ENCODE measurements at regions of chr5 and their contacts with region 1.

Region 1: GRCh38 chr5:74934949-74935751 is 69.0 kb upstream of the FAM169A start:
- DNase-seq: peak; percentile 49
- ATAC-seq: peak; percentile 91
- H3K4me3 Mint-ChIP-seq: peak overlapping the region; percentile 63
- H3K27ac Mint-ChIP-seq: peak overlapping the region; percentile 89
- H3K4me1 Mint-ChIP-seq: peaks cover 41% of the 10 kb centered on the region
- H3K27me3 Mint-ChIP-seq: peaks cover 7% of the 10 kb centered on the region

Region 2: GRCh38 chr5:74903165-74903787 is 31.9 kb before region 1 on chr5:
- CTCF ChIA-PET with region 1: no interaction called
- POLR2A ChIA-PET with region 1: no interaction called
- DNase-seq: no peak
- ATAC-seq: peak; percentile 47
- H3K4me3 Mint-ChIP-seq: no peak overlapping the region
- H3K27ac Mint-ChIP-seq: no peak overlapping the region
- H3K4me1 Mint-ChIP-seq: no peaks in the 10 kb centered on the region
- H3K27me3 Mint-ChIP-seq: no peaks in the 10 kb centered on the region

Region 3: DNA sequence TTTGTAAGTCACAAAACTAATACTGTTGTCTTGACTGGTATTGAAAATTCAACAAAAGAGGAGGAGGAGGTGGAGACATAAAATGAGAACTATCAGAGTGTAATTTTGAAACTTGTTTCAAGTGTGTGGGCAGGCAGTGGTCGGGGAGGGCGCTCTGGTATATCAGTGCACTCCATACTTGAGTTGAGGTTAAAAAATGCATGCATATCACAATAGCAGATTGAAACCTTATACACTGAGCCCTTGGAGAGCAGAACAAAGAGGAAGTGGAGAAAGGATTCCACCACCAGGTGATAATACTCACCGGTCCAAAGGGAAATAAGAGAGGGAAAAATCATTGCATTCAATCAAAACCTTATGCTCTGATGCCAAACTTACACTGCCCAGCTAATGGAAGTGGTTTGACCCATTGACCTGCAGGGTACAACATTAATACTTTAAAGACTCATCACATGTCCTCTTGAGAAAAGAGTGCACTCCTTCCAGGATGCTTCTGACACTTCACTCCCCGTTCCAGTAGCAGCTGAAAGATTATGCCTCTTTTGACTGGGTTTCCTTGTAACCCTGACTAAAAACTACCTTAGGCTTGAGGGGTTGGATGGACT is 10.5 kb after region 1 on chr5:
- CTCF ChIA-PET with region 1: interaction called, 15 read pairs
- POLR2A ChIA-PET with region 1: no interaction called
- DNase-seq: peak; percentile 38
- ATAC-seq: no peak
- H3K4me3 Mint-ChIP-seq: no peak overlapping the region
- H3K27ac Mint-ChIP-seq: no peak overlapping the region
- H3K4me1 Mint-ChIP-seq: peaks cover 8% of the 10 kb centered on the region
- H3K27me3 Mint-ChIP-seq: peaks cover 18% of the 10 kb centered on the region

Region 4: GRCh38 chr5:74953940-74954720 is 19.0 kb after region 1 on chr5:
- CTCF ChIA-PET with region 1: interaction called, 10 read pairs
- POLR2A ChIA-PET with region 1: no interaction called
- DNase-seq: no peak
- ATAC-seq: no peak
- H3K4me3 Mint-ChIP-seq: no peak overlapping the region
- H3K27ac Mint-ChIP-seq: no peak overlapping the region
- H3K4me1 Mint-ChIP-seq: peaks cover 7% of the 10 kb centered on the region
- H3K27me3 Mint-ChIP-seq: peaks cover 9% of the 10 kb centered on the region